ENCODE measurements at regions of chr22 and their contacts with region 1.

Region 1: DNA sequence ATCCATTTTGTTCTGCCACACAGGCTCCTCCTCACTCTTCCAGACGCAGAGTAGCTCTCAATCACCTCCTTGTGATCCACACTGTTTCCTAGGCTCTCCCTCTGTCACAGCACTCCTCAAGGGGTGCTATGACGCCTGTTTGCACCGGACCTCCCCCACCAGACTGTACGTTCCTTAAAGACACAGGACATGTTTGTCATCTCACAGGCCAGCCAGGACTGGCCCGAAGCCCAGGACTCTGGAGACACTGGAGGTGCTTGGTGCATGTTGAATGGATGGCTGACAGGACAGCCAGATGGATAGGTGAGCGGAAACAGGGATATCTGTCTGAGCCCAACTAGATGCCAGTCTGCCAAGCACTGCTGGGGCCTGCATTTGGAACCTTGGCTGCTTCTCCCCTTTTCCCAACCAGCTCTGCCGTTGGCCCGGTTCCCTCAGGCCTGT is 13.6 kb downstream of the PLA2G6 start:
- DNase-seq: peak; percentile 69 to 78 (median 73)
- ATAC-seq: peak; percentile 45 to 70
- H3K4me3 ChIP-seq: no peak overlapping the region
- H3K27ac ChIP-seq: peak overlapping the region; percentile 40
- H3K4me1 ChIP-seq: peaks cover 14% of the 10 kb centered on the region
- H3K27me3 ChIP-seq: no peaks in the 10 kb centered on the region

Region 2: GRCh38 chr22:38230108-38230825 is 62.3 kb after region 1 on chr22:
- intact Hi-C with region 1: loop called in 1 of 4 experiments (anchors 10 kb)
- DNase-seq: peak in 1 of 3 donors; percentile 87
- ATAC-seq: peak in 1 of 2 donors; percentile 28
- H3K4me3 ChIP-seq: no peak overlapping the region
- H3K27ac ChIP-seq: no peak overlapping the region
- H3K4me1 ChIP-seq: peaks cover 3% of the 10 kb centered on the region
- H3K27me3 ChIP-seq: no peaks in the 10 kb centered on the region